ENCODE measurements at regions of chrX and their contacts with region 1.

Region 1: DNA sequence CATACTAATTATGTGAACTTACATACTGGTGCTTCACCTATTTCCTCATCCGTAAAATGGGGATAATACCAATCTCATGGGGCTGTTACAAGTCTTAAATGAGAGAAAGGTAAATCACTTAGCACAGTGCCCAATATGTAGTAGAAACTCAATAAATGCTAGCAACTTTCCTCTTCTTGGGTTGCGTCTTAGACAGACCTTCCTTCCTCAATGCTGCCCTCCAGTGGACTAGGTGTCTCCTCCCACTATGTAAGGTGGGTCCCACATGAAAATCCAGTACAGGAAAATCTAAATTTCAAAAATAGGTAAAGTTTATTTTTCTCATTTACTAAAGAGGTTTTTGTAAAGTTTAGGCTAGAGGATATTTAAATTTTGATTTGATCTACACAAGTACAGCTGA is 20.6 kb downstream of the ZDHHC9 start:
- DNase-seq: peak in 1 of 2 donors; percentile 20
- ATAC-seq: no peak
- H3K4me3 ChIP-seq: no peak overlapping the region
- H3K27ac ChIP-seq: peak overlapping the region in 1 of 10 donors; percentile 23
- H3K4me1 ChIP-seq: no peaks in the 10 kb centered on the region
- H3K27me3 ChIP-seq: no peaks in the 10 kb centered on the region
- CTCF ChIP-seq: peak in 7 of 9 donors; percentile 48 to 67 (median 55)

Region 2: GRCh38 chrX:128676651-128677050 is 1146.5 kb before region 1 on chrX:
- intact Hi-C with region 1: no loop called
- DNase-seq: no peak
- ATAC-seq: no peak
- H3K4me3 ChIP-seq: no peak overlapping the region
- H3K27ac ChIP-seq: no peak overlapping the region
- H3K4me1 ChIP-seq: no peaks in the 10 kb centered on the region
- H3K27me3 ChIP-seq: no peaks in the 10 kb centered on the region
- CTCF ChIP-seq: no peak

Region 3: GRCh38 chrX:129593137-129593536 is 230.0 kb before region 1 on chrX:
- intact Hi-C with region 1: no loop called
- DNase-seq: no peak
- ATAC-seq: peak in 4 of 8 donors; percentile 32 to 61 (median 38)
- H3K4me3 ChIP-seq: no peak overlapping the region
- H3K27ac ChIP-seq: no peak overlapping the region
- H3K4me1 ChIP-seq: peaks cover 0 to 8% (median 0%) of the 10 kb centered on the region in 9 donors
- H3K27me3 ChIP-seq: no peaks in the 10 kb centered on the region
- CTCF ChIP-seq: no peak

Region 4: GRCh38 chrX:129759576-129760061 is 63.5 kb before region 1 on chrX:
- intact Hi-C with region 1: loop called in 1 of 10 experiments (anchors 10 kb)
- DNase-seq: peak; percentile 30 to 35
- ATAC-seq: peak; percentile 67 to 84 (median 74)
- H3K4me3 ChIP-seq: no peak overlapping the region
- H3K27ac ChIP-seq: peak overlapping the region in 3 of 10 donors; percentile 15 to 71 (median 36)
- H3K4me1 ChIP-seq: peaks cover 0 to 43% (median 3%) of the 10 kb centered on the region in 9 donors
- H3K27me3 ChIP-seq: peaks cover 0 to 11% (median 0%) of the 10 kb centered on the region in 7 donors
- CTCF ChIP-seq: peak in 5 of 9 donors; percentile 9 to 33 (median 26)

Measured in heart right ventricle (tissue), 16 donors.